B cell (primary cell): ENCODE measurements at regions of chr11 and their contacts with region 1.

Region 1: GRCh38 chr11:60345489-60345888 is 18.4 kb downstream of the MS4A6E start:
- DNase-seq: peak; percentile 57
- ATAC-seq: no peak
- H3K4me3 ChIP-seq: no peak overlapping the region
- H3K4me3 Mint-ChIP-seq: no peak overlapping the region
- H3K27ac ChIP-seq: no peak overlapping the region
- H3K27ac Mint-ChIP-seq: peak overlapping the region; percentile 55
- H3K4me1 ChIP-seq: peaks cover 22 to 26% of the 10 kb centered on the region in 2 donors
- H3K4me1 Mint-ChIP-seq: peaks cover 24% of the 10 kb centered on the region
- H3K27me3 ChIP-seq: no peaks in the 10 kb centered on the region
- H3K27me3 Mint-ChIP-seq: no peaks in the 10 kb centered on the region
- CTCF ChIP-seq: peak; percentile 72

Region 2: DNA sequence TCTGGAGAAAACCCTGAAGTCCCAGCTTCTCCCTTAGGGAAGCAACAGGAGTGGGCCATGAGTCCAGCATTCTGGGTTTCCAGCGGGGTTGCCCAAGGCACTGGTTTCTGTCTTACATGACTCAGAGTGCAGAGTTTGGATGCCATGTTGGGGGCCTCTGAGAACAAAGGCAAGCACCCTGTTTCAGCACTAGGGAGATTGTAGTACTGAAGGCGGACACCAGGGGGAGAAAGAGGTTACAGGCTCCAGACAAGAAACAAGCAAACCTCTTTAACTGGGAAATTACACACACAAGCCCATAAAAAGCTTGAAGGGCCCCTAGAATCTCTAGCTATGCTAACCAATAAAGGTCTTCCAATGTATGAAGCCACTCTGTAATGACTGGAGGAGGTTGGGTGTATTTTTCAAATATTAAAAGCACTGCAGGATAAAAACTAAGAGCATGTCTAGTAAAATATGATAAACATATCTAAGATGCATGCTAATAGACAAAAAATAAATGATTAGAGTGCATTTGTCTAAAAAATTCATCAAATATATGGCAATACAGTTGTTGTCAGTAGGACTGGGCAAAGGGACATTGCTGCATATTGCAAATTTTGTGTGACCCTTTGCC is 11.4 kb before region 1 on chr11:
- CTCF ChIA-PET with region 1: interaction called, 100 read pairs
- POLR2A ChIA-PET with region 1: no interaction called
- intact Hi-C with region 1: no loop called
- DNase-seq: peak; percentile 85
- ATAC-seq: peak; percentile 96
- H3K4me3 ChIP-seq: no peak overlapping the region
- H3K4me3 Mint-ChIP-seq: no peak overlapping the region
- H3K27ac ChIP-seq: no peak overlapping the region
- H3K27ac Mint-ChIP-seq: no peak overlapping the region
- H3K4me1 ChIP-seq: peaks cover 9 to 12% of the 10 kb centered on the region in 2 donors
- H3K4me1 Mint-ChIP-seq: peaks cover 13% of the 10 kb centered on the region
- H3K27me3 ChIP-seq: no peaks in the 10 kb centered on the region
- H3K27me3 Mint-ChIP-seq: no peaks in the 10 kb centered on the region
- CTCF ChIP-seq: peak; percentile 91

Region 3: GRCh38 chr11:60477035-60477445 is 131.6 kb after region 1 on chr11:
- CTCF ChIA-PET with region 1: interaction called, 23 read pairs
- POLR2A ChIA-PET with region 1: no interaction called
- intact Hi-C with region 1: no loop called
- DNase-seq: peak; percentile 92
- ATAC-seq: peak; percentile 95
- H3K4me3 ChIP-seq: peak overlapping the region in 1 of 5 experiments; percentile 16
- H3K4me3 Mint-ChIP-seq: peak overlapping the region; percentile 69
- H3K27ac ChIP-seq: peak overlapping the region; percentile 78 to 88
- H3K27ac Mint-ChIP-seq: peak overlapping the region; percentile 78
- H3K4me1 ChIP-seq: peaks cover 43 to 55% of the 10 kb centered on the region in 2 donors
- H3K4me1 Mint-ChIP-seq: peaks cover 66% of the 10 kb centered on the region
- H3K27me3 ChIP-seq: no peaks in the 10 kb centered on the region
- H3K27me3 Mint-ChIP-seq: no peaks in the 10 kb centered on the region
- CTCF ChIP-seq: no peak

Region 4: DNA sequence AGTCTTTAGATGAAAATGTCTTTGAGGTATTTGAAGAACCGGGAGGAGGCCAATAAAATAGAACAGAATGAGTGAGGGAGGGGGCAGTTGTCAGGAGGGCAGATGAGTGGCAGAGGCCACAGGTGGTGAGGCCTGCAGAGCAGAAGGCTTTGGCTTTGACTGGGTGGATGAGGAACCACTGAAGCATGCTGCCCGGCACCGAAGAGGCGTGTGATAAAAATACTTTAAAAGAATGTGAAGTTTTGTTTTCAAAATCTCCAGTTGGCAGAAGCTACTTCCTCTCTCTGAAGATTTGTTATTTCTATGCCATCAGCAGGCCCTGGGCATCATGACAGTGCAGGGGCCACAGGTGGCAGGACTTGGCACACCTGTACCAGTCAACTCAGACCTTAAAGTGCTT is 153.4 kb after region 1 on chr11:
- CTCF ChIA-PET with region 1: interaction called, 12 read pairs
- POLR2A ChIA-PET with region 1: no interaction called
- intact Hi-C with region 1: no loop called
- DNase-seq: peak; percentile 81
- ATAC-seq: peak; percentile 96
- H3K4me3 ChIP-seq: peak overlapping the region in 2 of 5 experiments; percentile 4 to 26
- H3K4me3 Mint-ChIP-seq: peak overlapping the region; percentile 51
- H3K27ac ChIP-seq: peak overlapping the region; percentile 84 to 88
- H3K27ac Mint-ChIP-seq: peak overlapping the region; percentile 79
- H3K4me1 ChIP-seq: peaks cover 27 to 35% of the 10 kb centered on the region in 2 donors
- H3K4me1 Mint-ChIP-seq: peaks cover 26% of the 10 kb centered on the region
- H3K27me3 ChIP-seq: no peaks in the 10 kb centered on the region
- H3K27me3 Mint-ChIP-seq: no peaks in the 10 kb centered on the region
- CTCF ChIP-seq: no peak

Region 5: DNA sequence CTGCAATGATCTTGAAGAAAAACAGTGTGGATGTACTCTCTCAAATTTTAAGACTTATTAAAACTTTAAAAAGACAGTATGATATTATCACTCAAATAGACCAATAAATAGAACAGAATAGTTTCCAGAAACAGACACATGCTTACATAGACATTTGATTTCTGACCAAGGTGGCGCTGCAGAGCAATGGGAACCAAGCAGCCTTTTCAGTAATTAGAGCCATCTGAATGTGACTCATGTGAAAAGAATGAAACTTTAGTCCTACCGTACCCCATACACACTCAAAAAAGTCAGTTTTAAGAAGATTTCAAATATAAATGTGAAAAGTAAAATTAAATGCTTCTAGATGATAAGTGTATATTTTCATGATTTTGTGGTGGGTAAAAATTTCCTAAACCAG is 279.8 kb after region 1 on chr11:
- CTCF ChIA-PET with region 1: interaction called, 120 read pairs
- POLR2A ChIA-PET with region 1: no interaction called
- intact Hi-C with region 1: no loop called
- DNase-seq: no peak
- ATAC-seq: no peak
- H3K4me3 ChIP-seq: no peak overlapping the region
- H3K4me3 Mint-ChIP-seq: no peak overlapping the region
- H3K27ac ChIP-seq: no peak overlapping the region
- H3K27ac Mint-ChIP-seq: no peak overlapping the region
- H3K4me1 ChIP-seq: no peaks in the 10 kb centered on the region
- H3K4me1 Mint-ChIP-seq: peaks cover 7% of the 10 kb centered on the region
- H3K27me3 ChIP-seq: no peaks in the 10 kb centered on the region
- H3K27me3 Mint-ChIP-seq: no peaks in the 10 kb centered on the region
- CTCF ChIP-seq: no peak

Region 6: GRCh38 chr11:60725592-60725991 is 380.1 kb after region 1 on chr11:
- CTCF ChIA-PET with region 1: no interaction called
- POLR2A ChIA-PET with region 1: no interaction called
- intact Hi-C with region 1: no loop called
- DNase-seq: no peak
- ATAC-seq: no peak
- H3K4me3 ChIP-seq: no peak overlapping the region
- H3K4me3 Mint-ChIP-seq: no peak overlapping the region
- H3K27ac ChIP-seq: no peak overlapping the region
- H3K27ac Mint-ChIP-seq: no peak overlapping the region
- H3K4me1 ChIP-seq: no peaks in the 10 kb centered on the region
- H3K4me1 Mint-ChIP-seq: no peaks in the 10 kb centered on the region
- H3K27me3 ChIP-seq: peaks cover 0 to 6% (median 0%) of the 10 kb centered on the region in 4 experiments
- H3K27me3 Mint-ChIP-seq: peaks cover 35% of the 10 kb centered on the region
- CTCF ChIP-seq: no peak

Region 7: GRCh38 chr11:60762851-60763691 is 417.6 kb after region 1 on chr11:
- CTCF ChIA-PET with region 1: interaction called, 17 read pairs
- POLR2A ChIA-PET with region 1: no interaction called
- intact Hi-C with region 1: no loop called
- DNase-seq: peak; percentile 80
- ATAC-seq: peak; percentile 89
- H3K4me3 ChIP-seq: peak overlapping the region in 1 of 5 experiments; percentile 10
- H3K4me3 Mint-ChIP-seq: peak overlapping the region; percentile 57
- H3K27ac ChIP-seq: no peak overlapping the region
- H3K27ac Mint-ChIP-seq: peak overlapping the region; percentile 75
- H3K4me1 ChIP-seq: peaks cover 25 to 30% of the 10 kb centered on the region in 2 donors
- H3K4me1 Mint-ChIP-seq: peaks cover 50% of the 10 kb centered on the region
- H3K27me3 ChIP-seq: peaks cover 0 to 18% (median 1%) of the 10 kb centered on the region in 4 experiments
- H3K27me3 Mint-ChIP-seq: peaks cover 26% of the 10 kb centered on the region
- CTCF ChIP-seq: peak; percentile 66